ENCODE measurements at regions of chr1 and their contacts with region 1.

Region 1: GRCh38 chr1:182761396-182762395 is 27.9 kb upstream of the NPL start:
- DNase-seq: no peak
- H3K4me3 ChIP-seq: no peak overlapping the region
- H3K27ac ChIP-seq: no peak overlapping the region
- H3K4me1 ChIP-seq: no peaks in the 10 kb centered on the region
- H3K27me3 ChIP-seq: no peaks in the 10 kb centered on the region
- CTCF ChIP-seq: no peak
- POLR2A ChIP-seq: no peak

Region 2: GRCh38 chr1:183953031-183953430 is 1191.3 kb after region 1 on chr1:
- intact Hi-C with region 1: loop called (anchors 5 kb)
- DNase-seq: no peak
- H3K4me3 ChIP-seq: no peak overlapping the region
- H3K27ac ChIP-seq: no peak overlapping the region
- H3K4me1 ChIP-seq: no peaks in the 10 kb centered on the region
- H3K27me3 ChIP-seq: no peaks in the 10 kb centered on the region
- CTCF ChIP-seq: no peak
- POLR2A ChIP-seq: no peak